ENCODE measurements at regions of chr17 and their contacts with region 1.

Region 1: GRCh38 chr17:42459256-42459800 is 650 bp downstream of the ATP6V0A1 start:
- H3K4me3 Mint-ChIP-seq: peak overlapping the region; percentile 93
- H3K27ac Mint-ChIP-seq: peak overlapping the region; percentile 96
- H3K4me1 Mint-ChIP-seq: peaks cover 62% of the 10 kb centered on the region
- H3K27me3 Mint-ChIP-seq: no peaks in the 10 kb centered on the region

Region 2: GRCh38 chr17:42388381-42389134 is 70.8 kb before region 1 on chr17 and contains the start of gene STAT3:
- intact Hi-C with region 1: loop called (anchors 2 kb)
- H3K4me3 Mint-ChIP-seq: peak within 1 kb of the TSS; percentile 97
- H3K27ac Mint-ChIP-seq: peak within 1 kb of the TSS; percentile 100
- H3K4me1 Mint-ChIP-seq: peaks cover 40% of the 10 kb centered on the region
- H3K27me3 Mint-ChIP-seq: peaks cover 2% of the 10 kb centered on the region

Region 3: GRCh38 chr17:42428141-42428944 is 31.0 kb before region 1 on chr17:
- intact Hi-C with region 1: loop called (anchors 5 kb)
- H3K4me3 Mint-ChIP-seq: no peak overlapping the region
- H3K27ac Mint-ChIP-seq: no peak overlapping the region
- H3K4me1 Mint-ChIP-seq: no peaks in the 10 kb centered on the region
- H3K27me3 Mint-ChIP-seq: peaks cover 44% of the 10 kb centered on the region

Region 4: GRCh38 chr17:42438600-42439567 is 20.4 kb before region 1 on chr17:
- intact Hi-C with region 1: loop called (anchors 2 kb)
- H3K4me3 Mint-ChIP-seq: no peak overlapping the region
- H3K27ac Mint-ChIP-seq: no peak overlapping the region
- H3K4me1 Mint-ChIP-seq: peaks cover 34% of the 10 kb centered on the region
- H3K27me3 Mint-ChIP-seq: peaks cover 1% of the 10 kb centered on the region